ENCODE measurements at regions of chr12 and their contacts with region 1.

Region 1: DNA sequence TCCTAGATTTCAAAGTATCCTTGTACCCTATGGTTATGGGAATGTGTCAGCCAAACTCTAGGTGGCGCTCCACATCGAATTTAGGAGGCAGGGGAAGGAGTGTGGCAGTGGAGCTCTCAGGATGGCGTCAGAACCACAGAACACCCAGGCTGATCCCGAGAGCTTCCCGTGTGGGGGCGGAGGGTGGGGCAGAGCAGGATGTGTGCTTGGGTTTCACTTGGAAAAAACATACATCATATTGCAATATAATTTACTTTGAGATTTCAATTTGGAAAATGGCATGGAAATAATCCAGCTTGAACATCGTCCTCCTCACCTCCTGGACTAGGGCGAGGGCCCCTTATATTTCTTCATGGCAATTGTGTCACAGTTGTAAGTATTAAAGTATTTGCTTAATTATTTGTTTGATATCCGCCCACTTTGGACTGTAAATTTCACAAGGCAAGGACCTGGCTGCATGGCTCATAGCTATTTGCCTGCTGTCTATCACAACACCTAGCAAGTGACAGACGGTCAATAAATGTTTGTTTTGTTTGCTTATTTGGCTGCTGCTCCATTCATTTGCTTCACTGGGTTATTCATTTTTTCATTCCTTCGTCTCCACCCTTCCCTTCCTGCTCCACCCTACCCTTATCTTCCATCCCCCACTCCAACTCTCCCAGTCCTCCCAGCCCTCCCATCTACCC is 221.5 kb upstream of the HMGA2 start:
- H3K4me3 Mint-ChIP-seq: no peak overlapping the region
- H3K27ac Mint-ChIP-seq: no peak overlapping the region
- H3K4me1 Mint-ChIP-seq: no peaks in the 10 kb centered on the region
- H3K27me3 Mint-ChIP-seq: peaks cover 13% of the 10 kb centered on the region

Region 2: DNA sequence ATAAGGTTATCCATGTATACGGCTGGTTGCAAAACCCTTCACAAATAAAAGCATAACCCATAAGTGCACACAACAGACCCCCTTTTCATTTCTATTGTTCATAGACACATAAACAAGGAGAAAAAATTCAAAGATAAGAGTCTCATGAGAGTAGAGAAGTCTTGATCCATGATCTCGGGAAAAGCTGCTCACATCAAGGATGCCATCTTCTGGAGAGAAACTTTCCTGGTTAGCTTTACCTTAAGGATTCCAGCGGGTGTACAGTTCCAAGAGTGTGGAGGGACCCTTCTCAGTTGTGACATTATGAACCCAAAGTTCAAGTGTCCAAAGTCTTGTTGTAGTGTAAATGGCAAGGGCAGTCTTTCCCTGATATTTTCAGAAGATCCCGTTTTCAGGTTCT is 383.3 kb after region 1 on chr12:
- intact Hi-C with region 1: loop called (anchors 5 kb)
- H3K4me3 Mint-ChIP-seq: no peak overlapping the region
- H3K27ac Mint-ChIP-seq: no peak overlapping the region
- H3K4me1 Mint-ChIP-seq: no peaks in the 10 kb centered on the region
- H3K27me3 Mint-ChIP-seq: no peaks in the 10 kb centered on the region

Region 3: GRCh38 chr12:66035288-66035966 is 432.7 kb after region 1 on chr12:
- intact Hi-C with region 1: loop called (anchors 1 kb)
- H3K4me3 Mint-ChIP-seq: no peak overlapping the region
- H3K27ac Mint-ChIP-seq: no peak overlapping the region
- H3K4me1 Mint-ChIP-seq: no peaks in the 10 kb centered on the region
- H3K27me3 Mint-ChIP-seq: peaks cover 3% of the 10 kb centered on the region